ENCODE measurements at regions of chr10 and their contacts with region 1.

Region 1: GRCh38 chr10:132353456-132354355 is 21.7 kb downstream of the LRRC27 start:
- DNase-seq: no peak
- H3K4me3 ChIP-seq: no peak overlapping the region
- H3K4me3 Mint-ChIP-seq: no peak overlapping the region
- H3K27ac Mint-ChIP-seq: no peak overlapping the region
- H3K4me1 ChIP-seq: no peaks in the 10 kb centered on the region
- H3K4me1 Mint-ChIP-seq: peaks cover 6% of the 10 kb centered on the region
- H3K27me3 ChIP-seq: no peaks in the 10 kb centered on the region
- H3K27me3 Mint-ChIP-seq: no peaks in the 10 kb centered on the region
- CTCF ChIP-seq: no peak

Region 2: DNA sequence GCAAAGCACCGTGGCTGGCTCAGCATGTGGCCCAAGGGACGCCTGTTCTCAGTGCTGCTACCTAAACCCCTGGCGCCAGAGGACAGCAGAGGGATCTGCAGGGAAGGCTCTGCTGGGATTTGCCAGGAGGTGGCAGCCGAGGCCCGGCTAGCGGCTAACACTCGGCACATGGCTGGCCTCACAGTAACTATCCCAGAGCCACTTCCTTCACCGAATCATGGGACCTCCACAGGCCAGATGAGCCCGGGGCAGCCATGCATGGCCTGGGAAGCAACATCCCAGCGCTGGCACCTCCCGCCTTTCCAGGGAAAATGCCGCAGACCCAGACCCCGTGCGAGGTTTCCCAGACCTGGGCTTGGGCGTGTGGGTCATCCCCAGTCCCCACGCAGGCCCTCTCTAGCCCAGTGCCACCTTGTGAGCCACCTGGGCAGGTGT is 130.5 kb before region 1 on chr10:
- CTCF ChIA-PET with region 1: no interaction called
- POLR2A ChIA-PET with region 1: no interaction called
- intact Hi-C with region 1: loop called (anchors 1 kb)
- DNase-seq: peak in 1 of 2 experiments; percentile 34
- H3K4me3 ChIP-seq: no peak overlapping the region
- H3K4me3 Mint-ChIP-seq: no peak overlapping the region
- H3K27ac Mint-ChIP-seq: no peak overlapping the region
- H3K4me1 ChIP-seq: no peaks in the 10 kb centered on the region
- H3K4me1 Mint-ChIP-seq: no peaks in the 10 kb centered on the region
- H3K27me3 ChIP-seq: no peaks in the 10 kb centered on the region
- H3K27me3 Mint-ChIP-seq: no peaks in the 10 kb centered on the region
- CTCF ChIP-seq: peak; percentile 23 to 59

Measured in Caco-2 (cell line).